ENCODE measurements at regions of chr11 and their contacts with region 1.

Region 1: DNA sequence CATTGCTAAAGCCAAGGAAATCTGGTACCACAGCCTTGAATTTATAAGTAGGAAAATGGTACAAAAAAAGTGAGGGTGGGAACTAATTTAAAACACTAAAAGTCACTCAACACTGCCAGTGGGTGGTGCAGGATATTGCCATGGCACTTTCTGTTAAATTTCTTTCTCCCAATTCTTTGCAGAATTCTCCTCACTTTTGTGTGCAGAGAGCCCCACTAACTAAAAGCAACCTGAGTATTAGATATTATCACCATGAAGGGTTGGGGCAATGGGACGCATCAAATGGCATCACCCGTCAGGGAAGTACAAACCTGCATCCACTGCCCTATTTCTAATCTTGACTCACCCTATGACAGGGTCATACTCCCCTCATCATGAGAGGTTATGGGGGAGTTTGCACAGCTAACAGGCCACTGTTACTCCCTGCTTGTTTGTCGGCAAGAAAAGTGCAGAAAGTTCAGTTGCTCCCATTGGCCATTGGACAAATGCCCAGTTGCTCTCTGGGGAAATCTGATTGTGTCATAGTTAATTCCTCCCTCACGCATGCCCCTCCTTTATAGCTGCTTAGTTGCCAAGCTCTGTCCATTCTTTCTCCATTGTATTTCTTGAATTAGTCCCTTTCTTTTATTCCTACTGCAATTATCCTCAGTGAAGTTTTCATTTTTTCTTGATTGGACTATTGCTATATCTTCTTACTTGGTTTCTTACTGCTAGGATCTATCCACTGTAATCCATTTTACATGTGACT is 93.8 kb upstream of the BLID start:
- DNase-seq: peak in 4 of 10 donors; percentile 36 to 71 (median 50)

Region 2: DNA sequence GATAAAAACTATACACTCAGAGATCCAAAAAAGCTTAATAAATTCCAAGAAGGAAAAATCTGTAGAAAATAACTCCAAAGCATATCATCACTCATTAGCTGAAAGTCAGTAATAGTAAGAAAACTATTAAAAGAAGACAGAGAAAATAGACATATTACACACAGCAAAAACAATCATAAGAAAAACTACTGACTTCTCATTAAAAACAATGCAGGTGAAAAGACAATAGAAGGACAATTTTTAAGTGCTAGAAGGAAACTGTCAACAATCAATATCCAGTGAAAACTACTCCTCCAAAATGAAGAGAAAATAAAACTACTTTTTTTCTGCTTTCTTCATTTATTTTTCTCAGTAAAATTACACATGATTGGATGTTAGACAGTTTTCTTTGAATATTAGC is 150.2 kb before region 1 on chr11:
- intact Hi-C with region 1: no loop called
- DNase-seq: no peak

Region 3: DNA sequence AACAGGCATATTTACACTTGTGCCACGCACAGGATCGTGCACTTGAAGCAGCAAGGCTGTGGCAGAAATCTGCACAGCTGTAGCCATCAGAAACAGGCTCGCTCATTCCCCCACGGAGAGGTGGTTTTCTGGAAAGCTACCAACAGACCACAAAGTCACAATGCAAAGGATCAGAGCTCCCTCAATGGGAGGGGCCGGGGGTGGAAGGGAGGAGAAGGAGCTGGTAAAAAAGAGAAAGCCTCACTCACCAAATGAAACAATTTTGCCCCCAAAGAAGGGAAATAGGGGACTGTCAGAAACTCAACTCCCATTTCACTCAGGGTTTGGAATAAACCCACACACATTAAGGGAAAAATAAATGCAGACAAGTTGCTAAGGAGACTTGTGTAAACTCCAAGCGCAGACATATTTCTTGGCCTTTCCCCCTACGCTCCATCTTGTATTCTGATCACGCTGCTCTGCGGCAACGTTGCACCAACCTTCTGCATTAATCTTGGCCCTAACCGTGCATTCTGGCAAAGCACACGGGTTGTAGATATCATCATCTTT is 50.5 kb before region 1 on chr11:
- intact Hi-C with region 1: loop called (anchors 5 kb)
- DNase-seq: peak in 7 of 10 donors; percentile 38 to 85 (median 54)

Region 4: GRCh38 chr11:122998727-122999366 is 789.1 kb after region 1 on chr11:
- intact Hi-C with region 1: no loop called
- DNase-seq: no peak

Measured in posterior cingulate gyrus (tissue), 11 donors.